CD8-positive, alpha-beta memory T cell (primary cell): ENCODE measurements at regions of chr3 and their contacts with region 1.

Region 1: DNA sequence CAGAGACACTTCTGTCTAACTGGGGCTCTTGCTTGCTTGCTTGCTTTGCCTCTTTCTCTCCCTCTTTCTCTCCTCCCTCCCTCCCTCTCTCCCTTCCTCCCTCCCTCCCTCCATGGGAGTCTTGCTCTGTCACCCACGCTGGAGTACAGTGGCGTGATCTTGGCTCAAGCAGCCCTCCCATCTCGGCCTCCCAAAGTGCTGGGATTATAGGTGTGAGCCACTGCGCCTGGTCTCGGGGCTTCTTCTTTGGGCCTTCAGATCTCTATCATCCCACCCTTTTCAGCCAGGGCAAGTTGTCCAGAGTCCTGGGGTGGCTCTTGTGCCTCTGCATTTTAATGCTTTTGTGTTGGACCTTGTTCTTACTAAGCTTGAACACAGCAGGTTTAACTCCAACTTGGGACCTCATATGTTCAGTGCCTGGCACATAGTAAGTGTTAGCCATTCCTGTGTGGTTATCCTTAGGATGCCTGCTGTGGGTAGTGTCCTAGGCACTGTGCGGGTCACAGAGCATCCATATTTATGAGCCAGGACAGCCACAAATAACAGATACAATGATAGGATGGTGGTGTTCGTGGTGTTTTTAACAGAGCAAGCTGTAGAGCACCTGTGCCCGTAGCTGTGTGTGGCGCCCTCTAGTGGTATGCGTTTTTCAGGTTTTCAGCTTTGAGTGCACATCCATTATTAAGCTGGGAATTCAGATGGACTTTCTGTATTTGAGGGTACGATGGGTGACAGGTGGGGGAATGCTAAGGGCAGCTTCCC is 75.1 kb downstream of the CCK start:
- DNase-seq: peak; percentile 38 to 68 (median 57)
- H3K4me3 ChIP-seq: no peak overlapping the region
- H3K4me3 Mint-ChIP-seq: no peak overlapping the region
- H3K27ac ChIP-seq: no peak overlapping the region
- H3K27ac Mint-ChIP-seq: peak overlapping the region in 3 of 8 donors; percentile 2 to 75 (median 20)
- H3K4me1 ChIP-seq: no peaks in the 10 kb centered on the region
- H3K4me1 Mint-ChIP-seq: peaks cover 13 to 22% (median 19%) of the 10 kb centered on the region in 3 donors
- H3K27me3 ChIP-seq: no peaks in the 10 kb centered on the region
- H3K27me3 Mint-ChIP-seq: no peaks in the 10 kb centered on the region

Region 2: GRCh38 chr3:40801284-40801741 is 1389.6 kb before region 1 on chr3:
- CTCF ChIA-PET with region 1: no interaction called
- POLR2A ChIA-PET with region 1: no interaction called
- DNase-seq: no peak
- H3K4me3 ChIP-seq: no peak overlapping the region
- H3K4me3 Mint-ChIP-seq: no peak overlapping the region
- H3K27ac ChIP-seq: no peak overlapping the region
- H3K27ac Mint-ChIP-seq: no peak overlapping the region
- H3K4me1 ChIP-seq: no peaks in the 10 kb centered on the region
- H3K4me1 Mint-ChIP-seq: no peaks in the 10 kb centered on the region
- H3K27me3 ChIP-seq: no peaks in the 10 kb centered on the region
- H3K27me3 Mint-ChIP-seq: peaks cover 10 to 14% of the 10 kb centered on the region in 2 donors

Region 3: GRCh38 chr3:41581700-41582099 is 609.2 kb before region 1 on chr3:
- CTCF ChIA-PET with region 1: no interaction called
- POLR2A ChIA-PET with region 1: no interaction called
- DNase-seq: no peak
- H3K4me3 ChIP-seq: no peak overlapping the region
- H3K4me3 Mint-ChIP-seq: no peak overlapping the region
- H3K27ac ChIP-seq: no peak overlapping the region
- H3K27ac Mint-ChIP-seq: no peak overlapping the region
- H3K4me1 ChIP-seq: no peaks in the 10 kb centered on the region
- H3K4me1 Mint-ChIP-seq: peaks cover 0 to 6% (median 0%) of the 10 kb centered on the region in 3 donors
- H3K27me3 ChIP-seq: no peaks in the 10 kb centered on the region
- H3K27me3 Mint-ChIP-seq: no peaks in the 10 kb centered on the region

Region 4: GRCh38 chr3:42214565-42215283 is 23.8 kb after region 1 on chr3:
- CTCF ChIA-PET with region 1: interaction called, 18 read pairs
- POLR2A ChIA-PET with region 1: no interaction called
- DNase-seq: no peak
- H3K4me3 ChIP-seq: no peak overlapping the region
- H3K4me3 Mint-ChIP-seq: peak overlapping the region in 6 of 7 donors; percentile 0 to 41 (median 34)
- H3K27ac ChIP-seq: no peak overlapping the region
- H3K27ac Mint-ChIP-seq: peak overlapping the region; percentile 48 to 92 (median 78)
- H3K4me1 ChIP-seq: peaks cover 52% of the 10 kb centered on the region
- H3K4me1 Mint-ChIP-seq: peaks cover 54 to 64% (median 60%) of the 10 kb centered on the region in 3 donors
- H3K27me3 ChIP-seq: no peaks in the 10 kb centered on the region
- H3K27me3 Mint-ChIP-seq: no peaks in the 10 kb centered on the region